Esophagus muscularis mucosa (tissue), 4 donors: ENCODE measurements at regions of chr9 and their contacts with region 1.

Region 1: DNA sequence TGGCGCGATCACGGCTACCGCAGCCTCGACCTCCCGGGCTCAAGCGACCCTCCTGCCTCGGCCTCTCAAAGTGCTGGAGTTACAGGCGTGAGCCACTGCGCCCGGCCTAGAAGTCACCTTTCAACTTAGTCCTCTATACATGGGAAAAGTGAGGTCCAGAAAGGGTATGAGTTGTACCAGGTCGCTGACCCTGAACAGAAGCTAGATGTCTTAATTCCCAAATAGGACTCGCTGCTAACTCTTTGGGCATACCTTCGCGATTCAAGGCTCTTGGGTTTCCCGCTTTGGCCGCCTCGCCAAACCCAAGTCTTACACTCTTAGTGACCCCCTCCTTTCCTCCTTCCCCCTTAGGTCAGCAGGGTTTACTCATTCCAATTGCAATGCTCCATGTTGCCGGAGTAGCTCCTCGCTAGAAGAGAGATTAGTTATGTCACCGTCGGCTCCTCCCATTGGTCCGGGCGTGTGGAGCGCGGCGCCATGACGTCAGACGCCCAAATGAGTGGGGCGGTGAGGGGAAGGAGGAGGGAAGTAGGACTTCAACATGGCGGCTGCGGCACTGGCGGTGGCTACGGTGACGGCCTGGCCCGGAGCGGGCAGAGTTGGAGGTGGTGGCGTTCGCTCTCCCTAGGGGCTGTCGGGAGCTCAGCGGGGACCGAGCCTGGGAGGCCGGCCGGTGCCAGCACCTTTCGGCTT is at the start of gene UBAP1:
- DNase-seq: peak; percentile 99
- H3K4me3 ChIP-seq: peak within 1 kb of the TSS; percentile 77 to 96 (median 90)
- H3K27ac ChIP-seq: peak within 1 kb of the TSS; percentile 87 to 97 (median 96)
- H3K4me1 ChIP-seq: peaks cover 4 to 31% (median 24%) of the 10 kb centered on the region in 4 donors
- H3K27me3 ChIP-seq: no peaks in the 10 kb centered on the region
- CTCF ChIP-seq: peak in 1 of 3 experiments; percentile 8
- EP300 ChIP-seq: no peak
- POLR2A ChIP-seq: peak; percentile 88
- total RNA-seq, gene UBAP1: 54.0 to 84.3 (median 72.6) TPM

Region 2: DNA sequence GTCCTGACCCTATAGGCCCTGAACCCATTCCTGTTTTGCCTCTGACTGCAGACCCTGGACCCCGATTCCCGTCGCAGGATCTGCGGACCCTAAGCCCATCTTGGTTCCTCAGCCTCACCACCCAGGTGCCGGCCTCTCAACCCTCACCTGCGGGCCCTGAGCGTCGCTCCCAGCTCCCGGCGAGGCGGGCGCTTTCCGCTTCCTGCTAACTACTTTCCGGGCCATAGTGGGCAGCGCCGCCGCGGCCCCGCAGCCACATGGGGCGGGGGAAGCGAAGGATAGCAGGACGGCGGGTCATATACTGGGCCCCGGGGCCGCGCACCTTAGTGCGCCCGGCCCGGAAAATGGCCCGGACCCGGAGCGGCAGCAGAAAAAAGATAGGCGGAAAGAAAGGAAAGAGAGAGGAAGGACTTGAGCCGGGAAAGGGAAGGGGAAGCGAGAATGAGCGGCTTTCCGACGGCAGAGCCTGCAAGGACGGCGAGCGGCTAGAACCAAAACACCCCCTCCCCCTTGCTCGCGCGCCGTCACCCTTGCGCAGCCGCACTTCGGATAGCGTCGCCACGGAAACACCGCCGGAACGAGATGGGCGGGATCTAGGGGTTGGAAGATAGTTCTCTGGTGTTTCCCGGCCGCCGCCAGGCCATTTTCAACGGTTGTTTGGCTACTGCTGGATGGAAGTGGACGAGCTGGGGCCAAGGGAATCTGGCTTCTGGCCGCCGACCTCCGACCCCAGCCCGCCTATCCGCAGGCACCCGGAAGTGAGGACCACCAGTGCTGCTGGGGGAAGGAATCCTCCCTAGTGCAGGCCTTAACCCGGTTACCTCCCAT is 52.2 kb before region 1 on chr9 and contains the start of gene DCAF12:
- intact Hi-C with region 1: loop called (anchors 5 kb)
- DNase-seq: peak; percentile 98
- H3K4me3 ChIP-seq: peak within 1 kb of the TSS; percentile 84 to 98 (median 85)
- H3K27ac ChIP-seq: peak within 1 kb of the TSS; percentile 91 to 94 (median 91)
- H3K4me1 ChIP-seq: peaks cover 36 to 48% (median 45%) of the 10 kb centered on the region in 4 donors
- H3K27me3 ChIP-seq: no peaks in the 10 kb centered on the region
- CTCF ChIP-seq: peak in 1 of 3 experiments; percentile 27
- EP300 ChIP-seq: no peak
- POLR2A ChIP-seq: peak; percentile 53
- total RNA-seq, gene DCAF12: 17.9 to 25.0 (median 21.9) TPM

Region 3: DNA sequence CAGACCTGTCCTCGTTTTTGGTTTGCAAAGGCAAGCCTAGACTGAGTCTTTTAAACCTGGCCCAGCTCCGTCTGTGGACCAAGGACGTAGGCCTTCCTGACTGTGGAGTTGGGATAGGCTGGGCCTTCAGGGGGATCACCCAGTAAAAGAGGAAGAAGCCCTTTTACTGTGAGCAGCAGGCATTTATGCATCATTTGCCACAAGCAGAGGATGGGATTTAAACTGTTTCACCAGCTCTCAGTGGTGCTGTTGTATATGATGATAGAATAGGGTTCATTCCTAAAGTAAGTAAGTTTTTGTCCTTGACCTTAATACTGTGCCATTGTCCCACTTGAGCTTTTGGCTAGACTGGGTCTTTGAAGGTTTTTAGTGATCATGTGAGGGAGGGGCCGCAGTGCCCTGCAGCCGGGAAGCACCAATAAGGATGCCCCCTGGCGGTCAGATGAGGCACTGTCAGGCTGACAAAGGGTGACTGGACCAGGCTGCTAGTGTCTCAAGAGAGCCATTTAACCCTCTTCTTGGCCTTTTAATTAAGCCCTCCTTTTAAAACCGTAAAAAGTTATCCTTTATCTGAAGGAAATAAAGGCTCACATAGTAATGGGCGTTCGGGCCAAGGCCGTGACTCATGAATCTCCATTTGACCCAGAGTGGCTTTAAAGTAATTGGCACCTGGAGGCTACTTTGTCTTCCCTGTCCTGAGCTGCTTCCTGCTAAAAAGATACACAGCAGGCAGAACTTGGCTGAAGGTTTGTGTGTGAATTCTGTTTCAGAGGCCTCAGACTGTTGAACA is 74.2 kb after region 1 on chr9:
- intact Hi-C with region 1: loop called (anchors 2 kb)
- DNase-seq: no peak
- H3K4me3 ChIP-seq: no peak overlapping the region
- H3K27ac ChIP-seq: peak overlapping the region; percentile 70 to 86 (median 83)
- H3K4me1 ChIP-seq: peaks cover 54 to 91% (median 70%) of the 10 kb centered on the region in 4 donors
- H3K27me3 ChIP-seq: no peaks in the 10 kb centered on the region
- CTCF ChIP-seq: peak; percentile 92 to 95 (median 93)
- EP300 ChIP-seq: no peak
- POLR2A ChIP-seq: no peak

Region 4: DNA sequence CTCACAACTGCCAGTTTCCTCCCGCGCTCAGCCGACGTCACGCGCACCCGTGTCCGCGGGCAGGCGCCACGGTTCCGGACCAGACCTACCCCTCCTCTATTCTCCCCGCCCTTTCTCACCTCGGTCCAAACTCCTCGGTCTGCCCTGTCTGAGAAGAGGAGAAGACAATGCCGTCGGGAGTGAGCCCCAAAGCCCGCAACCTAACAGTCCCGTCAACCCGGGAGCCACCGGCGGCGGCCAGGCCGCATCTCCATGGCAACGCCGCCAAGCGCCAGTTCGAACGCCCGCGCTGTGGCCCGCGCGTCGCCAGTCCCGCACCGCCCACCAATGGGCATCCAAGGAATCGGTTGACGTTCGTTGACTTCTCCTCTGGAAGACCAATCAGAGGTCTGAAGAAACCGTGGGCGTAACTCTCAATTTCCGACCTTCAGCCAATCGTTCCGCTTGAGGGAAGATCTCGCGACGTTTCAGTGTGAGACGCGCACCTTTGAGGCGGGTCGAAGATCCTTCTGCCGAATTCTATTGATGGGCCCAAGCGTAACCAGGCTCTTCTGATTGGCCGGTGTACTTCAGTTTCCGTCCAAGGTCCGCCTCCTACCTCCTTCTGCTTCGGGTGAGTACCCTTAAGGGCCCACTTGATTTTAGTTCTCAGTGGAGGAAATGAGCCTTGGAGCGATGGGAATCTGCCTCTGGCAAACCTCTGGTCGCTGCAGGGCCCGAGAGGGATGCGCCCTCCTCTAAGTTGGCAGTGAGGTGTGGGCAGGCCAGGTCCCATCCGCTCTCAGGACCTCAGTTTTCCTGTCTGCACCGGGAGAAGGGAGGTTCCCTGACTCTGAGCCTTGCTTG is 150.5 kb after region 1 on chr9 and contains the starts of genes KIF24 and NUDT2:
- intact Hi-C with region 1: loop called (anchors 10 kb)
- DNase-seq: peak; percentile 99
- H3K4me3 ChIP-seq: peak within 1 kb of the TSS; percentile 70 to 81 (median 76)
- H3K27ac ChIP-seq: peak within 1 kb of the TSS; percentile 92 to 96 (median 94)
- H3K4me1 ChIP-seq: peaks cover 14 to 44% (median 38%) of the 10 kb centered on the region in 4 donors
- H3K27me3 ChIP-seq: no peaks in the 10 kb centered on the region
- CTCF ChIP-seq: no peak
- EP300 ChIP-seq: no peak
- POLR2A ChIP-seq: peak; percentile 20
- total RNA-seq, gene KIF24: 0.42 to 1.5 (median 0.62) TPM
- total RNA-seq, gene NUDT2: 15.0 to 45.3 (median 23.0) TPM